ENCODE measurements at regions of chr22 and their contacts with region 1.

Region 1: DNA sequence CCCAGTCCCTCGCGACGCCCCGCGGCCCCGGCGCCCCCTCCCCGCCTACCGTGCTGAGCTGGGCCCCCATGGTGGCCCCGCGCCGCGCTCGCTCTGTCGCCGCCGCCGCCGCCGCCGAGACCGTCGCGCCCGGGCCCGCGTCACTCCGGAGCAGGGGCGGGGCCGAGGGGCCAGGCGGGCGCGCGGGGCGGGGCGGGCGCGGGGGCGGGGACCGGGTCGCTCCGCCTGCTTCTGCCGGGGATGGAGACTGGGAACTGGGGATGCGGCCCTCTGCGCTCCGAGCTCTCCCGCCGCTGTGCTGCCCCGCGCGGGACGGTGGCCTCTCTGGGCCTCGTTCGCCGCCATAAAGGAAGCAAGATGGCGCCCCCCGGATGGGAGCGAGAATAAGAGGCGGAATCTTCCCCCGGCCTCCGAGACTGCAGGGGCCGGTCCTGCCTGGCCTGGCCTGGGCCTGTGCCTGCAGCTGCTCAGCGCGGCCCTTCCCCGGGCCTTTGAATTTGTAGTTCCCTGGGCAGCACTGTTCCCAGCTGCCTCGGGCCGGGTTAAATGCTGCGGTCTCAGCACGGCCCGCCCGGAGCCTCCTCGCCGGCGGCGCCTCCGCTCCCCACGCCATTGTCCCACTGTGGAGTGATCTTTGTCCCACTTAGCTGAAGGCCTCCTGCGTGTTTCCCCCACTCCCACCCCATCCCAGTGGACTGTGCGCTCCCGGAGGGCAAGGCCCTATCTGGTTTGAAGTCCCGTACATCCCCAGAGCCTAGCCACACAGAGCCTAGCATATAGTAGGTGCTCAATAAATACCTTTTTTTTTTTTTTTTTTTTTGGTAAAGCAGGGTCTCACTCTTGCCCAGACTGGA is at the start of gene CYB5R3:
- DNase-seq: peak; percentile 71 to 76
- ATAC-seq: peak; percentile 75
- H3K4me3 ChIP-seq: peak within 1 kb of the TSS; percentile 77 to 100 (median 93)
- H3K27ac ChIP-seq: peak within 1 kb of the TSS; percentile 92 to 99 (median 98)
- H3K4me1 ChIP-seq: peaks cover 41 to 44% of the 10 kb centered on the region in 2 donors
- H3K27me3 ChIP-seq: no peaks in the 10 kb centered on the region
- CTCF ChIP-seq: peak in 1 of 5 experiments; percentile 11
- POLR2A ChIP-seq: peak; percentile 41 to 75
- total RNA-seq, gene CYB5R3: 44.3 to 163 (median 105) TPM

Region 2: DNA sequence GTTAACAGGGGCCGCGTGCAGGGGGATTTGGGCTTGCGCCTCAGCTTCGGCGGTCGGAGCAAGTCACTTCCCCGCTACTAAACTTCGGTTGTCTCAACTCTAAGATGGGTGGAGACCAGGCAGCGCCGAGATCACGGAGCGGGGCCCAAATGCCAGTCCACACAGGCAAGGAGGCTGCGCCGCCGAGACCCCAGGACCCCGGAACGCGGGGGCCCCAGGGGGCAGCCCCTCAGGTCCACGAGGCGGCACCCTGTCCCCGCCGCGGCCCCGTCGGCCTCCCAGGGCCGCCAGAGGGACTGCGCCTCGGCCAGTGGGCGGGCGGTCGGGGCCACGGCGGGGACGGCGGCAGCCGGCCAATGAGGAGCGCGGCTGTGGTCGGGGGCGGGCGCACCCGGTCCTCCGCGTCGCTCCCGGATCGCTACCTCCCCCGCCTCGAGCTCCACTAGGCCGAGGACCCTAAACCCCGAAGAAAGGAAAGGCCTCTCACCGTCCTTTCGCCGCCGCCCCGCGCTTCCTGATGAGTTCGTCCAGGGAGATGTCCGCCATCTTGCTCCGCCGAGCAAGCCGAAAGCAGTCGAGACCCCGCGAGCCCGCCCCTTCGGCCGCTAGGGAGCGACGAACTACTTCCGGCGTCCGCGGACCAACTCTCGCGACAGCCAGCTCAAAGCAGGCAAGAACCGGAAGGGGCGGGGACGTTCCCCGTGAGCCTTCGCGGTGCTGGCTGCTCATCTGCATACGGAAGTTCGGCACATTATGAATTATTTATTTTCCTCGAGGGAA is 35.0 kb before region 1 on chr22 and contains the start of gene POLDIP3:
- in situ Hi-C with region 1: no loop called
- intact Hi-C with region 1: loop called (anchors 1 kb)
- DNase-seq: peak; percentile 98 to 99
- ATAC-seq: peak; percentile 82 to 87
- H3K4me3 ChIP-seq: peak within 1 kb of the TSS; percentile 78 to 86 (median 80)
- H3K27ac ChIP-seq: peak within 1 kb of the TSS; percentile 90 to 96 (median 94)
- H3K4me1 ChIP-seq: peaks cover 48 to 55% of the 10 kb centered on the region in 2 donors
- H3K27me3 ChIP-seq: no peaks in the 10 kb centered on the region
- CTCF ChIP-seq: peak; percentile 25 to 58 (median 42)
- POLR2A ChIP-seq: peak; percentile 36 to 86
- total RNA-seq, gene POLDIP3: 19.7 to 28.7 (median 23.0) TPM

Region 3: DNA sequence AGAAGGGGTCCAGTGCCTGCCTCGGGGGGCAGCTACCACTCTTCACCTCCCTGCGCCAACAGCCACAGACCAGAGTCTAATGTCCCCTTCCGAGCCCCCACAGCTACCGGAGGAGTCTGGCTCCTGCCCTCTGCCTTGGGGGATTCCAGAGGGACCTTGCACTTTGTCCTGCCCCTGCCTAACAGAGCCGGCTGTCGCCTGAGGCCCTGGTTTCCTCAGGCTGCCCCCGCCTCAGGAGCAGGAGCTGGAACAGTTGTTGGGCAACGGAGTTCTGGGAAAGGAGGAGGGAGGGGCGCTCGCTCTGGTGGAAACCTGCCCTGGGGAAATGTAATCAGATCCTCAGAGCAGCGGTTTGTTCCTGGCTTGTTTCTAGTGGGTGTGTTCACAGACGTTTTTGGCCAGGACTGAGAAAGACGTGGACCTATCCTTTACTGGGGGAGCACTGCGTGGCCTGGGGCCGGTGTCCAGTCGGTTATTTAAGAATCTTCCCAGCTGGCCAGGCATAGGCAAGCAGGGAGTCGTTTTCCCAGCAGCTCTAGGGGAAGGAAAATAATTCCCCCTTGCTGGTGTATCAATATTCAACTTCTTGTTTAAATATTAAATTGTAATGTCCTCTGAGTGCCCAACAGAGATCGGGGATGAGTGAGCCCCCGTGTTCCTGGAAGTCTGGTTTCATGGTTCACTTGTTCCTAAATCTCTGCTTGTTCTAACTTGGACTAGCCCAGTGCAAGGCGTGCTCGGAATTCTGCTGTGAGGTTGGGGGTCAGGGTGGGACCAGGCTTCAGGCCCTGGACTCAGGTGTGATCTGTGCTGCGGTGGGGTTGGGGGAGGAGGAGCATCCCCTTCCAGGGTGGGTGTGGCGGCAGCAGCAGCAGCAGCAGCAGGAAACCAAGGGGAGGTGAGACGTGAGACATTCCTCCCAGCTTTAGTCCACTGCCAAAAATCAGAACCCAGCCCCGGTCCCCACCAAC is 39.1 kb after region 1 on chr22:
- in situ Hi-C with region 1: no loop called
- intact Hi-C with region 1: loop called (anchors 5 kb)
- DNase-seq: peak; percentile 95 to 98
- ATAC-seq: peak; percentile 92 to 97
- H3K4me3 ChIP-seq: peak overlapping the region in 3 of 4 donors; percentile 3 to 37 (median 26)
- H3K27ac ChIP-seq: peak overlapping the region; percentile 91 to 99 (median 97)
- H3K4me1 ChIP-seq: peaks cover 70 to 74% of the 10 kb centered on the region in 2 donors
- H3K27me3 ChIP-seq: no peaks in the 10 kb centered on the region
- CTCF ChIP-seq: no peak
- POLR2A ChIP-seq: peak; percentile 87 to 89

Region 4: GRCh38 chr22:42820066-42820763 is 170.7 kb after region 1 on chr22:
- in situ Hi-C with region 1: loop called in 2 of 4 experiments (anchors 25 kb)
- intact Hi-C with region 1: no loop called
- DNase-seq: no peak
- ATAC-seq: peak in 1 of 2 donors; percentile 51
- H3K4me3 ChIP-seq: no peak overlapping the region
- H3K27ac ChIP-seq: peak overlapping the region in 2 of 4 donors; percentile 11 to 20
- H3K4me1 ChIP-seq: peaks cover 8 to 13% of the 10 kb centered on the region in 2 donors
- H3K27me3 ChIP-seq: no peaks in the 10 kb centered on the region
- CTCF ChIP-seq: peak in 3 of 5 experiments; percentile 41 to 59 (median 52)
- POLR2A ChIP-seq: no peak

Region 5: GRCh38 chr22:42901790-42902508 is 252.5 kb after region 1 on chr22:
- in situ Hi-C with region 1: no loop called
- intact Hi-C with region 1: loop called (anchors 5 kb)
- DNase-seq: peak; percentile 74 to 85
- ATAC-seq: peak; percentile 64 to 81
- H3K4me3 ChIP-seq: no peak overlapping the region
- H3K27ac ChIP-seq: peak overlapping the region; percentile 87 to 94 (median 89)
- H3K4me1 ChIP-seq: peaks cover 58 to 66% of the 10 kb centered on the region in 2 donors
- H3K27me3 ChIP-seq: no peaks in the 10 kb centered on the region
- CTCF ChIP-seq: peak in 3 of 5 experiments; percentile 15 to 42 (median 40)
- POLR2A ChIP-seq: no peak

Measured in gastrocnemius medialis (tissue), 4 donors.